ENCODE measurements at regions of chr10 and their contacts with region 1.

Region 1: GRCh38 chr10:98028168-98028770 is 2.2 kb downstream of the CRTAC1 start:
- DNase-seq: peak; percentile 83
- H3K4me3 Mint-ChIP-seq: no peak overlapping the region
- H3K27ac Mint-ChIP-seq: no peak overlapping the region
- H3K4me1 Mint-ChIP-seq: peaks cover 4% of the 10 kb centered on the region
- H3K27me3 Mint-ChIP-seq: peaks cover 55% of the 10 kb centered on the region

Region 2: GRCh38 chr10:98038288-98038687 is 10.0 kb after region 1 on chr10:
- CTCF ChIA-PET with region 1: interaction called, 17 read pairs
- intact Hi-C with region 1: no loop called
- DNase-seq: no peak
- H3K4me3 Mint-ChIP-seq: no peak overlapping the region
- H3K27ac Mint-ChIP-seq: no peak overlapping the region
- H3K4me1 Mint-ChIP-seq: no peaks in the 10 kb centered on the region
- H3K27me3 Mint-ChIP-seq: peaks cover 66% of the 10 kb centered on the region

Region 3: DNA sequence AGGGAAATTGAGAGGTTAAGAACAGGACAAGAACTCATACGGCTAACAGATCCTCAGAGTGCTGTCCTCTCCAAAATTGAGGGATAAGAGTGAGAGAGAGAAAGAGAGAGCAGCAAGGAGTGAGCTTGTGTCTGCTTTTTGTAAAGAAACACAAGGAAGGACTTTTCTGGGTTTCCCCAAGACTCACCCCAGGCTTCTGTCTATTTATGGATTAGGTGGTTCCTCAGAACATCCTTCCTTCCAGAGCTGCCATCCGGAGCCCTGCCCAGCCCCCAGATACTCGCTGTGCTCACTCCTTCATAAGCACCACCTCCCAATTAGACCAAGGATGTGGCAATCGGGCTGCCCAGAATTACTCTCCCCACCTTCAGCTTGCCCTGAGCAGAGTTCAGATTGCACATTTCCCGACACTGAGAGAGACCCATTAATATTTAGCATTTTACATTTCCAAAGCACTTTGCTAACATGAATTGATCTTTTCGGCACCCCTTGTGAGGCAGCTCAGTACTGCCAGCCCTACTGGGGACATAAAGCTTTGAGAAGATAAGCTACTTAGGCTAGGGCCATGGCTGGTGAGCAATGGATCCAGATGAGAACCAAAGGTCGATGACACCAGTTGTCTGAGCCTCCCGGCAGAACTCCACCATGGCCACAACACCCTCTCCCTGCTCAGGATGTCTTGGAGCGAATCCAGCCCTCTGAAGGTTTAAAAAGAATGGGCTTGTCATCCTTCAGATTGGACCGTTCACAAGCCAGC is 86.9 kb after region 1 on chr10:
- CTCF ChIA-PET with region 1: no interaction called
- intact Hi-C with region 1: no loop called
- DNase-seq: no peak
- H3K4me3 Mint-ChIP-seq: no peak overlapping the region
- H3K27ac Mint-ChIP-seq: no peak overlapping the region
- H3K4me1 Mint-ChIP-seq: no peaks in the 10 kb centered on the region
- H3K27me3 Mint-ChIP-seq: peaks cover 29% of the 10 kb centered on the region